IMR-90 (cell line): ENCODE measurements at regions of chr4 and their contacts with region 1.

Region 1: DNA sequence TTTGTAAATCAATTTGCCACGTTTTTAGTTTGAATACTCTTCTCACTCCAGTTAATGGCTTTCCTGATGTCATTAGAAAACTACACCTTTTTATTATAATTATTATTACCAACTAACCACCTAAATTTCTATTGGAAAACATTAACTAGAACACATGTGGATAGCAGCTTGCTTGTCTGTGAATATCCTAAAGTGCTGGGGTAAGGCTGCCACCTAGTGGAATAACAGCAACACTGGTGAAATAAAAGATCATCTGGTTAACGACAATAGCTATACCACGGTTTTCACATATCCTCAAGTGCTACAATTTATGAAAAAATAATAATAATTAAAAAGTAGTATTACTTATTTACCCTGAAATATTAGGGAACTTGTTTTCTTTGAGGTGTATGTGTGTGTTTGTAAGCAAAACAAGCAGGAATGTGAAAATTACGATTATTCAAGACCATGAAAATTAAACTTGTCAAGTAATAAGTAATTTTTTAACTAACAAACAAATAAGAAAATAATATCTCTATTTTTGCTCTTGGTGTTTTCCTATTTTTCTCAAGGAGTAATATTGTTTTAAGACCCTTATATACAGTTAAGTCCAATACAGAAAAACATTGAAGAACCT is 130.1 kb upstream of the TECRL start:
- DNase-seq: peak; percentile 49
- ATAC-seq: peak; percentile 60; the same call in 1 of the 2 replicates
- H3K4me3 ChIP-seq: no peak overlapping the region
- H3K27ac ChIP-seq: no peak overlapping the region
- H3K4me1 ChIP-seq: no peaks in the 10 kb centered on the region
- H3K27me3 ChIP-seq: no peaks in the 10 kb centered on the region
- CTCF ChIP-seq: peak; percentile 73
- POLR2A ChIP-seq: no peak
- RAD21 ChIP-seq: peak; percentile 75

Region 2: GRCh38 chr4:64158648-64159326 is 380.6 kb before region 1 on chr4:
- CTCF ChIA-PET with region 1: no interaction called
- POLR2A ChIA-PET with region 1: no interaction called
- dilution Hi-C with region 1: no loop called
- in situ Hi-C with region 1: no loop called
- intact Hi-C with region 1: loop called (anchors 1 kb)
- DNase-seq: peak; percentile 22
- ATAC-seq: no peak
- H3K4me3 ChIP-seq: no peak overlapping the region
- H3K27ac ChIP-seq: no peak overlapping the region
- H3K4me1 ChIP-seq: no peaks in the 10 kb centered on the region
- H3K27me3 ChIP-seq: no peaks in the 10 kb centered on the region
- CTCF ChIP-seq: peak; percentile 57
- POLR2A ChIP-seq: no peak
- RAD21 ChIP-seq: peak; percentile 42

Region 3: DNA sequence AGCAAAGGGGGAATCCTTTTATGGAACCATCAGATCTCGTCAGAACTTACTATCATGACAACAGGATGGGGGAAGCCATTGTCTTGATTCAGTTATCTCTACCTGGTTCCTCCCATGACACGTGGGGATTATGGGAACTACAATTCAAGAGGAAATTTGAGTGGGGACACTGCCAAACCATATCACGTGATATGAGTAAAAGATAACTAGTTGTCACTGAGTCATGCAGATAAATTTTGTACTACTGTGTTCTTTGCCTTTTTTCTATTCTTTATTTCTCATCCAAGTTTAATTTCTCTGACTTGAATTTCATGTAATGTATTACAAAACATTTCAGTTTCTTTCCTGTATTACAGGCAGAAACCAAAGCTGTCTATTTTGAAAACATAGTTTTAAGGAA is 747.7 kb after region 1 on chr4:
- CTCF ChIA-PET with region 1: no interaction called
- POLR2A ChIA-PET with region 1: no interaction called
- dilution Hi-C with region 1: no loop called
- in situ Hi-C with region 1: no loop called
- intact Hi-C with region 1: no loop called
- DNase-seq: no peak
- ATAC-seq: no peak
- H3K4me3 ChIP-seq: no peak overlapping the region
- H3K27ac ChIP-seq: no peak overlapping the region
- H3K4me1 ChIP-seq: no peaks in the 10 kb centered on the region
- H3K27me3 ChIP-seq: no peaks in the 10 kb centered on the region
- CTCF ChIP-seq: no peak
- POLR2A ChIP-seq: no peak
- RAD21 ChIP-seq: no peak